AG04450 (cell line): ENCODE measurements at regions of chr2 and their contacts with region 1.

Region 1: DNA sequence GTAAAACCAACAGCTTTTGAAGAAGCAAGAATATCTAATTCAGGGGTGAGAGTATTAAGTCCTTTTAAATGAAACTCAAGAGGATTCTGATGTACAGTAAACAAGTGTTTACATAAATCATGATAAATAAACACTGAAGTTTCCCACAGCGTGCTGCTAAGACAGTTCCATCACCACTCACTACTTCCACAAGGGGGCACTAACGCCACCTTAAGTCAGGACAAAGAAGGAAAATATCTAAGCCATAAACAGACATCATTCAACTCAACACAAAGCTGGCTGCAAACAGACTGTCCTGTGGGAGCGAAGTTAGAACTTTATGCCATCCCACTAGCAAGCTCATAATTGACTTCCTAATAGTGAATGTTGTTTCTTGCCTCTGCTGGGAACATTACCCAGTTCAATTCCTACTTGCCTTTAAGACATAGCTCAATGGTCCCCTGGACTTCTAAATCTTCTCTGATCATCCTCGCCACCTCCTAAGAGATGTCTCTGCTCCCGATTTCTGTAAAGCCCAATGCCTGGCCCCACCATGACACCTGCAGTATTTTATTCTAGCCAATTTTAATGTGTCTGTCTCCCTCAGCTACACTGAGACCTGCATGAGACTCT is 36.5 kb downstream of the MRPL44 start:
- DNase-seq: peak; percentile 53
- H3K4me3 ChIP-seq: no peak overlapping the region
- H3K27ac ChIP-seq: no peak overlapping the region
- H3K27me3 ChIP-seq: no peaks in the 10 kb centered on the region
- CTCF ChIP-seq: peak; percentile 84

Region 2: GRCh38 chr2:223970343-223971128 is 23.2 kb before region 1 on chr2:
- CTCF ChIA-PET with region 1: interaction called, 137 read pairs
- POLR2A ChIA-PET with region 1: no interaction called
- DNase-seq: no peak
- H3K4me3 ChIP-seq: no peak overlapping the region
- H3K27ac ChIP-seq: no peak overlapping the region
- H3K27me3 ChIP-seq: no peaks in the 10 kb centered on the region
- CTCF ChIP-seq: peak; percentile 93

Region 3: GRCh38 chr2:224025874-224026273 is 32.1 kb after region 1 on chr2:
- CTCF ChIA-PET with region 1: interaction called, 13 read pairs
- POLR2A ChIA-PET with region 1: no interaction called
- DNase-seq: no peak
- H3K4me3 ChIP-seq: no peak overlapping the region
- H3K27ac ChIP-seq: no peak overlapping the region
- H3K27me3 ChIP-seq: no peaks in the 10 kb centered on the region
- CTCF ChIP-seq: no peak

Region 4: GRCh38 chr2:224222291-224222690 is 228.6 kb after region 1 on chr2:
- CTCF ChIA-PET with region 1: interaction called, 11 read pairs
- POLR2A ChIA-PET with region 1: no interaction called
- DNase-seq: no peak
- H3K4me3 ChIP-seq: no peak overlapping the region
- H3K27ac ChIP-seq: no peak overlapping the region
- H3K27me3 ChIP-seq: no peaks in the 10 kb centered on the region
- CTCF ChIP-seq: no peak

Region 5: DNA sequence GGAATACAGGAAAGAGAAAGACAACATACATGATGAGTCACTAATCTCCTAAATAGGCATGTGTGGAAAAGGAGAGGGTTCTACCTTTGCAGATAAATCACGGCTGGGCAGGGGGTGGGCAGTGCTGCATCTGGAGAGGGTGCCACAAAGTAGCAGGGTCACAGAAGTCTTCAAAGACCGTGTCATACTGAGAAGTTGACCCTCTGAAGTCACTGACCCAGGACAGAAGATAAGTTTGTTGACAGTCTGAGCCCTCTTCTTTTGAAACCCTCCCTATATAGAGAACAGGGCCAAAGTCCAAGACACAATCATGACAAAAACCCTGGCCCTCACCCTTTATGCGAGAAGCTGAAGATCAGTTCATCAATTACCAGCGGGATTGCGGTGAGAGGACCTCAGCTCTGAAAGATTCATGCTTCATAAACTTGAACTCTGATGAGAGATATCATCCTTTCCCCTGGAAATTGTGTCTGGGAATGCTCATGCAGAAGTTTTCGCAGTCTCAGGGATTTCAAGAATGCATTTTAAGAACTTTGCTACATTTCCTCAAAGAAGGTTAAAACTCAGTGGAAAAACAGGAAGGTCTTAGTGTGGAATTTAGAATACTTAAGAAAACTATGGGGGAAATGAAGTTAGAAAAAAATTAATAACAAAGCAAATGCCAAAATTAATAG is 278.6 kb after region 1 on chr2:
- CTCF ChIA-PET with region 1: interaction called, 58 read pairs
- POLR2A ChIA-PET with region 1: no interaction called
- DNase-seq: no peak
- H3K4me3 ChIP-seq: no peak overlapping the region
- H3K27ac ChIP-seq: no peak overlapping the region
- H3K27me3 ChIP-seq: no peaks in the 10 kb centered on the region
- CTCF ChIP-seq: no peak

Region 6: GRCh38 chr2:224523626-224524577 is 530.2 kb after region 1 on chr2:
- CTCF ChIA-PET with region 1: no interaction called
- POLR2A ChIA-PET with region 1: no interaction called
- DNase-seq: no peak
- H3K4me3 ChIP-seq: no peak overlapping the region
- H3K27ac ChIP-seq: peak overlapping the region; percentile 32
- H3K27me3 ChIP-seq: no peaks in the 10 kb centered on the region
- CTCF ChIP-seq: no peak